K562 (cell line): ENCODE measurements at regions of chr6 and their contacts with region 1.

Region 1: DNA sequence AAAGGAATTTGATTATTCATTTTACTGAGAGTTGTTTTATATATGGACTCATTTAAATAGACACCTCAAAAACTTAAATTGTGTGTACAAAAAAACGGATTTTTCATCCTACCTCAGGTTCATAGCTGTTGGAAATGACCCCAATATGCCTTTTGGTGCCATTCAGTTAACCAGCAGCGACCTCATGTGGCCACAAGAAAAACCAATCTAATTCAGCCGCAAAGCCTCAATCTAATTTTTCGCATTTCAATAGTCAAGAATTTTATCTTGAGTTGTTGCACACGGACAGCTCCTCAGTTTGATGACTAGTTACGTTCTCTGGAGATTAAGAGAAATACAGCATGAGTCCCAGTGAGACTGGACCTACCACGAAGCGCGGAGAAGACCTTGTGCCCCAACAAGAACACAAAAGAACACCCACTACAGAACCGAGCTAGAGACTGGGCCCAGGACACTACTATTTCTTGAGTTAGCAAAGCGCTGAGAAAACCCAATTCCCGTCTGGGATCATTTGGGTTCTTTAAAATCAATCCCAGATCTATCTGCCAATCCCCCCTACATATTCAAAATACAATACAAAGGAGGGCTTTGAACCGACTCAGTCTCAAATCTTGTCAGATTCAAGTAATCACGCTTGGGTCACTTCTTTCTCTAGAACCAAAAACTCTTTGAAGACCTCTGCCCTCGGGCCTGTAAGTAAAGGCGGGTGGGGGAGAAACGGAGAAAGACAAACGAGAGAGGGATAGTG is 1.1 kb downstream of the TCP11 start:
- DNase-seq: peak; percentile 62 to 79 (median 66)
- ATAC-seq: peak; percentile 80
- H3K4me3 ChIP-seq: no peak overlapping the region
- H3K27ac ChIP-seq: no peak overlapping the region
- H3K4me1 ChIP-seq: peaks cover 0 to 13% of the 10 kb centered on the region in 2 experiments; a peak in 2 of 5 replicates
- H3K27me3 ChIP-seq: peaks cover 5 to 8% of the 10 kb centered on the region in 2 experiments; a peak in 4 of 5 replicates
- CTCF ChIP-seq: peak; percentile 85 to 97 (median 90)
- EP300 ChIP-seq: 0 out of 2 replicates have a peak, but pooled peaks have one; percentile 1
- POLR2A ChIP-seq: no peak
- RAD21 ChIP-seq: peak; percentile 97 to 98

Region 2: GRCh38 chr6:34161857-34162515 is 978.1 kb before region 1 on chr6:
- CTCF ChIA-PET with region 1: interaction called, 4 read pairs
- POLR2A ChIA-PET with region 1: no interaction called
- in situ Hi-C with region 1: no loop called
- intact Hi-C with region 1: loop called (anchors 10 kb)
- DNase-seq: no peak
- ATAC-seq: no peak
- H3K4me3 ChIP-seq: no peak overlapping the region
- H3K27ac ChIP-seq: no peak overlapping the region
- H3K4me1 ChIP-seq: no peaks in the 10 kb centered on the region
- H3K27me3 ChIP-seq: peaks cover 8 to 20% of the 10 kb centered on the region in 2 experiments; a peak in 3 of 5 replicates
- CTCF ChIP-seq: no peak
- EP300 ChIP-seq: no peak
- POLR2A ChIP-seq: no peak
- RAD21 ChIP-seq: no peak

Region 3: DNA sequence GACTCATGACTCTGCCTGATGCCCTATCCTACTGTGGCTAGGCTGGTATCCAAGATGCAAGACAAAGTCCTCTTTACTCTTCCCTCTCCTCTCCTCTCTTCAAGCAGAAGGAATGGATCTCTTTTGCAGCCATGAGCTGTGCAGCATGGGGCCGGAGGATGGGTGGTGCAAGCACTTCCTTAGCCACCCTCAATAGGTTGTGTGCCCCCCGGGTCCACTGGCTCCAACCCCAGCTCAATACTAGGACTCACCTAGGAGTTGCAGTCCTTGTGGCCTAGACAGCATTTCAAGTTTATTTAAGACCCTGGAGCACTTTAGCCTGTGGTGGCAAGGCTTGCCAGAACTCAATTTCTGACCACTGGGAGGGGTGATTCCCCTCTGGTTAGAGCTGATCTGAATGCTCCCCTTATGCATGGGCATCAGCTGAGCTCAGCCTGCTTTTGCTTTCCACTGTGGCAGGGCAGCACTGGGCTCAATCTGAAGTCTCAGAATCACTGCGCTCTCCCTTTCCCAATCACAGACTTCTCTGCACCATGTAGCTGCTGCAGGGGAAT is 965.2 kb before region 1 on chr6:
- CTCF ChIA-PET with region 1: no interaction called
- POLR2A ChIA-PET with region 1: no interaction called
- in situ Hi-C with region 1: loop called (anchors 10 kb)
- intact Hi-C with region 1: no loop called
- DNase-seq: no peak
- ATAC-seq: no peak
- H3K4me3 ChIP-seq: no peak overlapping the region
- H3K27ac ChIP-seq: no peak overlapping the region
- H3K4me1 ChIP-seq: peaks cover 0 to 17% of the 10 kb centered on the region in 2 experiments; a peak in 2 of 5 replicates
- H3K27me3 ChIP-seq: 0 out of 5 replicates have a peak, but pooled peaks cover 0 to 11% of the 10 kb centered on the region in 2 experiments
- CTCF ChIP-seq: no peak
- EP300 ChIP-seq: no peak
- POLR2A ChIP-seq: no peak
- RAD21 ChIP-seq: no peak

Region 4: GRCh38 chr6:34459899-34460593 is 680.0 kb before region 1 on chr6:
- CTCF ChIA-PET with region 1: interaction called, 14 read pairs
- POLR2A ChIA-PET with region 1: no interaction called
- in situ Hi-C with region 1: loop called (anchors 25 kb)
- intact Hi-C with region 1: loop called (anchors 2 kb)
- DNase-seq: peak; percentile 74 to 82 (median 76)
- ATAC-seq: peak; percentile 79
- H3K4me3 ChIP-seq: no peak overlapping the region
- H3K27ac ChIP-seq: no peak overlapping the region
- H3K4me1 ChIP-seq: peaks cover 10 to 16% of the 10 kb centered on the region in 2 experiments; a peak in 4 of 5 replicates
- H3K27me3 ChIP-seq: no peaks in the 10 kb centered on the region
- CTCF ChIP-seq: peak; percentile 85 to 94 (median 85)
- EP300 ChIP-seq: no peak
- POLR2A ChIP-seq: no peak
- RAD21 ChIP-seq: peak; percentile 94 to 97

Region 5: DNA sequence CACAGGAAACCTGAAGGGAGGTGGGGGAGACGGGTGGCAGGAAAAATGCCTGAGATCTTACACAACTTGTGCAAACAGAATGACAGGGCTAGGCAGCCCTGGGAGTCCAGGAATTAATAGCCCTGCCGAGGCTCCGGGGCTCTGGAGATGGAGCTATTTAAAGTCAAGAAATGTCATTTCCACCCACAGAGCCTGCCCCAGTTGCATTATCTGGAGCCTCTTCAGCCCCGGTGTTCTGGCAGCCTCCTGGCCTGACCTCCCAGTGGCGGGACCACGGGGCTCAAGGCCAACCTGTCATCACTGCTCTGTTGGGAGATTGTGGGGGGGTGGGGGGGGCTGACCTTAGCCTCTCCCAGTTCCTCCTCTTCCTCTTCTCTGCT is 45.2 kb after region 1 on chr6:
- CTCF ChIA-PET with region 1: no interaction called
- POLR2A ChIA-PET with region 1: no interaction called
- in situ Hi-C with region 1: no loop called
- intact Hi-C with region 1: no loop called
- DNase-seq: peak in 2 of 4 experiments; percentile 36 to 37
- ATAC-seq: peak; percentile 45
- H3K4me3 ChIP-seq: no peak overlapping the region
- H3K27ac ChIP-seq: no peak overlapping the region
- H3K4me1 ChIP-seq: peaks cover 10 to 37% of the 10 kb centered on the region in 2 experiments; a peak in 4 of 5 replicates
- H3K27me3 ChIP-seq: peaks cover 9 to 16% of the 10 kb centered on the region in 2 experiments; a peak in 3 of 5 replicates
- CTCF ChIP-seq: no peak
- EP300 ChIP-seq: no peak
- POLR2A ChIP-seq: no peak
- RAD21 ChIP-seq: no peak